ENCODE measurements at regions of chr16 and their contacts with region 1.

Region 1: DNA sequence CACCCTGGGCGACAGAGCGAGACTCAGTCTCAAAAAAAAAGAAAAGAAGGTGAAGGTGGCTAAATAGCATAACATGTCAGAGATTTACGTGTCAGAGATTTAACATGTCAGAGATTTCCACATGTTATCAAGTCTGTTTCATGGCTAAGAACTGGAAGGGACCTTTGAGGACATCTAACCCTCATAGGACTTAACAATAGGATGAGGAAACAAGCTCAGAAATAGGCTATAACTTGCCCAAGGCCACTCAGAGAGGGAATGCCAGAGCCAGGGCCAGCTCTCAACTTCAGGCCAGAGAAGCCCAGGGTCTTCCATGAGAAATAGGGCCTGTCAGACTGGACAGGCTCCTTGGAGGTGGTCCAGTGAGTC is 26.8 kb upstream of the ZNF629 start:
- DNase-seq: no peak
- H3K4me3 ChIP-seq: peak overlapping the region; percentile 53
- H3K27ac ChIP-seq: peak overlapping the region; percentile 11
- H3K27me3 ChIP-seq: no peaks in the 10 kb centered on the region
- CTCF ChIP-seq: no peak

Region 2: DNA sequence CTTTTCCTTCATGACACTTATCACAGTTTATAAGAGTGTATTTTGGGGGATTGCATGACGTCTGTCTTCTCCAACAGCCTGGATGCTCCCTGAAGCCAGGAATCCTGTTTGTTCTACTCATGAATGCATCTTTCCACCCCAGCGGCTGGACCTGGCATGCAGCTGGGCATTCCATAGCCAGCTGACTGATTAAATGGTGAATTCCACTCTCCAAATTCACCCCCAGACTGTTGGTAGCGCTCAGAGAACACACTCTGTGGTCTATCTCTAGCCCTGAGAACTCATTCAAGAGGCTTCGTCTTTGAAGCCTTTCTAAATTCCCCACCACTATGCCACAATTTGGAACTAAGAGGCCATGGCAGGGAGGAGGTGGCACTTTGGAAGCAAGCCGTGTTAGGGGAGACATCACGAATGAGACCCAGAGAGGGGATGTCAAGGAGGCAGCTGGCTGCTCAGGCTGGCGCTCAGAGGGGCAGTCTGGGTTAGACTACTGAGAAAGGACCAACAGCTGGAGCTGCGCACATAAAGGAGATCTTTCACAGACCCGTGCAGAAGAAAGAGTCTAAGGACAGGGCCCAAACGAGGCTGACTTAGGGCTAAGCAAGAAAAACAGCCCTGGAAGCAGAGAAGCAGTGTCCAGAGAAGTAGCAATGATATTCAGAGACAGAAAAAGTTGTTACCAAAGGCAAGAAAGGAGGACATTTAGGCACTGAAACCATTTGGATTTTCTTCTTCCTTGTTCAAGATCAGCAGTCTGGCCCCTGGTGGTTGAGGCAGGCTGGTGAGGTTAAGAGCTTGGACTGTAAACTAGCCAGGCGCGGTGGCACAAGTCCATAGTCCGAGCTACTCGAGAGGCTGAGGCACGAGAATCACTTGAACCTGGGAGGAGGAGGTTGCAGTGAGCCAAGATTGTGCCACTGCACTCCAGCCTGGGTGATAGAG is 15.6 kb after region 1 on chr16:
- CTCF ChIA-PET with region 1: interaction called, 13 read pairs
- POLR2A ChIA-PET with region 1: no interaction called
- DNase-seq: no peak
- H3K4me3 ChIP-seq: no peak overlapping the region
- H3K27ac ChIP-seq: no peak overlapping the region
- H3K27me3 ChIP-seq: no peaks in the 10 kb centered on the region
- CTCF ChIP-seq: peak; percentile 21; the same call in 1 of the 2 replicates

Region 3: DNA sequence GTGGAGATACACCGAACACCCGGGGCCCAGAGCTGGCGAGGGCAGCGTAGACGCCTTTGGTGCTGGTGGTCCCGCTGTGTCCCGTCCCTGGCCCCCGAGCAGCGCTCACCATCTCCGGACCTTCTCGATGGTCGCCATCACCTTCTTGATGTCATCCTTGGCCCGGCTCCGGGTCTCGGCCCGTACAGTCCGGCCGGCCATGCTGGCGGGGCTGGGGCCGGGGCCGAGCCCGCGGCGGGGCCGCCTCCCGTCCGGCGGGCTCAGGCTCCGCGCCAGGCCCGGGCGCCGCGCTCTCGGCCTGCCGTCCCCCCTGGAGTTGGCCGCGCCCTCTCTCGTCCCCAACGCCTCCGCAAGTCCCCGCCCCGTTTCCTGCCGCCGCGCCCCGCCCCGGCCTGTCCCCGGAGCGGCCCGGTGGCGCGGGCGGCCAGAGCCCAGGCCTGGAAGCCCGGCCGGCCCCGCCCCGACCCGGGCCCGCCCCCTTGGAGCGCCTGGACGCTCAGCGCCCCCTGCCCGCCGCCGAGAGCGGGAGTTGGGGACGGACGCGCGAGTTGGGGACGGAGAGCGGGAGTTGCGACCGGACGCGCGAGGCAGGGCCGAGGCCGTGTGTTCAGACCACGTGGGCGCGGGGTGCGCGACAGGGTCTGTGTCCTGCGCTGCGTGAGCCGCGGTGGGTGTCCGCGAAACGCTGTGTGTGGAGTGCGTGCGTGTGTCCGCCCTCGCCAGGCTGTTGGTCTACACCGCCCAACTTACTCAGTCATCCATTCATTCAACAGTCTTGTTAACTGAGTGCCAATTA is 80.1 kb after region 1 on chr16 and contains the start of gene BCL7C:
- CTCF ChIA-PET with region 1: interaction called, 11 read pairs
- POLR2A ChIA-PET with region 1: no interaction called
- DNase-seq: no peak
- H3K4me3 ChIP-seq: peak within 1 kb of the TSS; percentile 93
- H3K27ac ChIP-seq: peak within 1 kb of the TSS; percentile 57
- H3K27me3 ChIP-seq: no peaks in the 10 kb centered on the region
- CTCF ChIP-seq: peak; percentile 48
- polyA plus RNA-seq, gene BCL7C: 27.7 and 27.8 TPM in 2 replicates

Region 4: GRCh38 chr16:30902029-30902972 is 88.5 kb after region 1 on chr16:
- CTCF ChIA-PET with region 1: interaction called, 25 read pairs
- POLR2A ChIA-PET with region 1: no interaction called
- DNase-seq: no peak
- H3K4me3 ChIP-seq: peak overlapping the region; percentile 45
- H3K27ac ChIP-seq: peak overlapping the region; percentile 61
- H3K27me3 ChIP-seq: no peaks in the 10 kb centered on the region
- CTCF ChIP-seq: no peak

Region 5: GRCh38 chr16:30912794-30913412 is 99.1 kb after region 1 on chr16:
- CTCF ChIA-PET with region 1: interaction called, 10 read pairs
- POLR2A ChIA-PET with region 1: no interaction called
- DNase-seq: no peak
- H3K4me3 ChIP-seq: no peak overlapping the region
- H3K27ac ChIP-seq: no peak overlapping the region
- H3K27me3 ChIP-seq: no peaks in the 10 kb centered on the region
- CTCF ChIP-seq: no peak

Measured in AG04450 (cell line).